Testis (tissue), 5 donors: ENCODE measurements at regions of chrX and their contacts with region 1.

Region 1: DNA sequence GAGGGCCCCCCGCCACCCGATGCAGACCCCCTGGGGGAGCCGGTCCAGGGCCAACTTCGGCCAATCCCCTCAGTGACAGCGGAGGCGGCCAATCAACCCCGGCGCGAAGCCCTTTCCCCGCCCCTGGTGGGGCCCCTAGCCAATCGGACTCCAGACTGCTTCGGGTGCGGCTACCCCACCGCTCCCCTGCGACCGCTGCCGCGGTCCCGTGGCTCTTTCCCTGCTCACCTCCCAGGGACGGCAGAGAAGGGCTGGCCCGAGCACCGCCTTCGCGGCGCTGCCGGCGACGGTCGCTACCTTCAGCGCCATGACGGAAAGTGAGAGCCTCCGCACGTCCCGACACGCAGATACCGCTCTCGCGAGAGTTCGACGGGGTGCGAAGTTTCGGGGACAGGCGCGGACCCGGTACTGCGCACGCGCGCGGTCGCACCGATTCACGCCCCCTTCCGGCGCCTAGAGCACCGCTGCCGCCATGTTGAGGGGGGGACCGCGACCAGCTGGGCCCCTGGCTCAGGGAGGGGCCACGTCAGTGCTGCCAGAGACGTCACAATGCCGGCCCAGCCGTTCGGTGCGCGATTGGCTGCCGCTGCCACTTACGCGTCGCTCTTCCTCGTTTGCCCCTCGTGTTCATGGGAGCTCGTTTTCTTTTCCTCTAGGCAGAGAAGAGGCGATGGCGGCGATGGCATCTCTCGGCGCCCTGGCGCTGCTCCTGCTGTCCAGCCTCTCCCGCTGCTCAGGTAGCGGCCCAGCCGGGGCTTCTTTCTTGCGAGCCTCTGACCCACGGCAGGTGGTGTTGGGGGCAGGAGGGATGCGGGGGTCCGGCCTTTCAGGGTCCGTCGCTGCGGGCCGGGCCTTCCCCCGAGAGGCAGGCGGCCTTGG is at the starts of genes IDH3G and SSR4:
- DNase-seq: peak; percentile 92
- H3K4me3 ChIP-seq: peak within 1 kb of the TSS; percentile 60 to 70
- H3K27ac ChIP-seq: peak within 1 kb of the TSS; percentile 87 to 88
- H3K4me1 ChIP-seq: no peaks in the 10 kb centered on the region
- H3K27me3 ChIP-seq: no peaks in the 10 kb centered on the region
- CTCF ChIP-seq: no peak
- POLR2A ChIP-seq: no peak
- total RNA-seq, gene IDH3G: 74.9 to 83.1 TPM
- total RNA-seq, gene SSR4: 246 to 294 TPM

Region 2: GRCh38 chrX:153724252-153725040 is 69.8 kb before region 1 on chrX and contains the starts of genes ABCD1 and BCAP31:
- intact Hi-C with region 1: loop called (anchors 10 kb)
- DNase-seq: peak; percentile 89
- H3K4me3 ChIP-seq: peak within 1 kb of the TSS; percentile 61 to 79
- H3K27ac ChIP-seq: peak within 1 kb of the TSS; percentile 72 to 82
- H3K4me1 ChIP-seq: no peaks in the 10 kb centered on the region
- H3K27me3 ChIP-seq: no peaks in the 10 kb centered on the region
- CTCF ChIP-seq: no peak
- POLR2A ChIP-seq: peak; percentile 38
- total RNA-seq, gene ABCD1: 84.4 to 112 TPM
- total RNA-seq, gene BCAP31: 149 to 153 TPM